Posterior vena cava (tissue), 2 donors: ENCODE measurements at regions of chr12 and their contacts with region 1.

Region 1: GRCh38 chr12:12398026-12398859 is 41.4 kb downstream of the BORCS5 start:
- DNase-seq: no peak

Region 2: DNA sequence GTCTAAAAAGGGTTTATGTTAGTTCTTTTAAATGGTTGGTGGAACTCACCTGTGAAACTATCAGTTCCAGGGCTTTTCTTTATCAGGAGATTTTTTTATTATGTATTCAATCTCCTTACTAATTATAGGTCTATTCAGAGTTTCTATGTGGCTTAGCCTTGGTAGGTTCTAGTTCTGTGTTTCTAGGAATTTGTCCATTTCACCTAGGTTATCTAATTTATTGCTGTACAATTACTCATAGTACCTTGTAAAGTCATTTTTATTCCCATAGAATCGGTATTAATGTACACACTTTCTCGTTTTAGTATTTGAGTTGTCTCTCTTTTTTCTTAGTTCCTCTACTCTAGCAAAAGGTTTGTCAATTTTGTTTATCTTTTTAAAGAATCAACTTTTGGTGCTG is 17.6 kb after region 1 on chr12:
- intact Hi-C with region 1: no loop called
- DNase-seq: no peak

Region 3: DNA sequence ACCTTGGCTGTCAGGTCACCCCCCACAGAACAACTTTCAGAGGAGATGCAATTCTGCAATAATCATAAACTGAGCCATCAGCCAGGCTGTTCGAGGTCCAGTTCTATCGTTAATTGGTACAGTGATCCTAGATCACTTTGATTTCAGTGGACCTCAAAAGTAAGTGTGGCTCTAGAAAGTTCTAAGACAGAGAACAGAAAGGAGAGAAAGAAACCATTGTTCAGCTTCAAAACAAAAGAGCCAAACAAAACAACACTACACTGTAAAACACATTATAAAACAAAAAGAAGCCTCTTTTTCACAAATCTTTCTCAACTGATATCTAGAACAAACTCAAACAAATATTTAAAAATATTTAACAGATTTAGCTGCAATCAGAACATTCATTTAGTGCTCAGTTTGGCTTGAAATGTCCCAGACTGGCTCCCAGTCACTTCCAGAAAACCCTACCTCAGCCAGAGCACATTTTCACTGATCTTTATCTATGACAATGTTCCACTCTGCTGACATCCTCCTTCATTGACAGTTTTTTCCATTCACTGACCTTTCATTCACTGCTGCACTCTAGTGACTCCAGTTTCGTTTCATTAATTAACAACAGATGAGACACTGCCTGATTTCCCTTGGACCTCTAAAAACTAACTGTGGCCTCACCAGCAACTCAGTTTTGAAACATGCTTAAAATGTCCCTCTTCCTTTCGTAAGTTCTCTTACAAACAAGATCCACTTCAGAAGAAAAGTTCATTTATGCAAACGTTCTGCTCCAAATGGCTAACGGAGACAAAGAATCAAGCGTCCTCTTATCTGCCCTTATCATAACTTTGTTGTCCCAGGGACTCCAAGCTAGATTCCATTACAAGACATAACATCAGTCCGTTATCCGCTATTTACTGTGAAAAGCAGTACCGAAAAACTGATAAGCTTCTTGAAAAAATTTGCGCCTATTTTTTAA is 107.6 kb after region 1 on chr12:
- intact Hi-C with region 1: loop called (anchors 1 to 10 kb)
- DNase-seq: no peak

Region 4: GRCh38 chr12:12661086-12661485 is 262.8 kb after region 1 on chr12:
- intact Hi-C with region 1: no loop called
- DNase-seq: no peak